MCF 10A (cell line): ENCODE measurements at regions of chr6 and their contacts with region 1.

Region 1: GRCh38 chr6:158704181-158704822 is 54.4 kb downstream of the SYTL3 start:
- DNase-seq: peak; percentile 65
- H3K4me3 Mint-ChIP-seq: peak overlapping the region; percentile 75
- H3K27ac Mint-ChIP-seq: peak overlapping the region; percentile 12
- H3K4me1 Mint-ChIP-seq: peaks cover 32% of the 10 kb centered on the region
- H3K27me3 Mint-ChIP-seq: no peaks in the 10 kb centered on the region
- CTCF ChIP-seq: peak; percentile 99

Region 2: GRCh38 chr6:158684745-158685324 is 19.5 kb before region 1 on chr6:
- CTCF ChIA-PET with region 1: no interaction called
- POLR2A ChIA-PET with region 1: no interaction called
- intact Hi-C with region 1: no loop called
- DNase-seq: no peak
- H3K4me3 Mint-ChIP-seq: no peak overlapping the region
- H3K27ac Mint-ChIP-seq: no peak overlapping the region
- H3K4me1 Mint-ChIP-seq: no peaks in the 10 kb centered on the region
- H3K27me3 Mint-ChIP-seq: no peaks in the 10 kb centered on the region
- CTCF ChIP-seq: no peak

Region 3: GRCh38 chr6:158737710-158738615 is 33.7 kb after region 1 on chr6:
- CTCF ChIA-PET with region 1: interaction called, 5 read pairs
- POLR2A ChIA-PET with region 1: interaction called, 21 read pairs
- intact Hi-C with region 1: no loop called
- DNase-seq: peak; percentile 86
- H3K4me3 Mint-ChIP-seq: no peak overlapping the region
- H3K27ac Mint-ChIP-seq: peak overlapping the region; percentile 1
- H3K4me1 Mint-ChIP-seq: peaks cover 22% of the 10 kb centered on the region
- H3K27me3 Mint-ChIP-seq: no peaks in the 10 kb centered on the region
- CTCF ChIP-seq: no peak

Region 4: GRCh38 chr6:158793432-158793831 is 89.1 kb after region 1 on chr6:
- CTCF ChIA-PET with region 1: interaction called, 8 read pairs
- POLR2A ChIA-PET with region 1: interaction called, 3 read pairs
- intact Hi-C with region 1: loop called (anchors 1 kb)
- DNase-seq: peak; percentile 71
- H3K4me3 Mint-ChIP-seq: no peak overlapping the region
- H3K27ac Mint-ChIP-seq: no peak overlapping the region
- H3K4me1 Mint-ChIP-seq: peaks cover 15% of the 10 kb centered on the region
- H3K27me3 Mint-ChIP-seq: no peaks in the 10 kb centered on the region
- CTCF ChIP-seq: peak; percentile 22

Region 5: GRCh38 chr6:158853072-158853871 is 149.0 kb after region 1 on chr6:
- CTCF ChIA-PET with region 1: no interaction called
- POLR2A ChIA-PET with region 1: interaction called, 9 read pairs
- intact Hi-C with region 1: loop called (anchors 1 kb)
- DNase-seq: peak; percentile 97
- H3K4me3 Mint-ChIP-seq: no peak overlapping the region
- H3K27ac Mint-ChIP-seq: no peak overlapping the region
- H3K4me1 Mint-ChIP-seq: peaks cover 15% of the 10 kb centered on the region
- H3K27me3 Mint-ChIP-seq: no peaks in the 10 kb centered on the region
- CTCF ChIP-seq: no peak

Region 6: GRCh38 chr6:158972241-158973233 is 268.2 kb after region 1 on chr6:
- CTCF ChIA-PET with region 1: interaction called, 87 read pairs
- POLR2A ChIA-PET with region 1: interaction called, 14 read pairs
- intact Hi-C with region 1: loop called (anchors 1 kb)
- DNase-seq: peak; percentile 63
- H3K4me3 Mint-ChIP-seq: no peak overlapping the region
- H3K27ac Mint-ChIP-seq: no peak overlapping the region
- H3K4me1 Mint-ChIP-seq: peaks cover 5% of the 10 kb centered on the region
- H3K27me3 Mint-ChIP-seq: no peaks in the 10 kb centered on the region
- CTCF ChIP-seq: peak; percentile 57

Region 7: DNA sequence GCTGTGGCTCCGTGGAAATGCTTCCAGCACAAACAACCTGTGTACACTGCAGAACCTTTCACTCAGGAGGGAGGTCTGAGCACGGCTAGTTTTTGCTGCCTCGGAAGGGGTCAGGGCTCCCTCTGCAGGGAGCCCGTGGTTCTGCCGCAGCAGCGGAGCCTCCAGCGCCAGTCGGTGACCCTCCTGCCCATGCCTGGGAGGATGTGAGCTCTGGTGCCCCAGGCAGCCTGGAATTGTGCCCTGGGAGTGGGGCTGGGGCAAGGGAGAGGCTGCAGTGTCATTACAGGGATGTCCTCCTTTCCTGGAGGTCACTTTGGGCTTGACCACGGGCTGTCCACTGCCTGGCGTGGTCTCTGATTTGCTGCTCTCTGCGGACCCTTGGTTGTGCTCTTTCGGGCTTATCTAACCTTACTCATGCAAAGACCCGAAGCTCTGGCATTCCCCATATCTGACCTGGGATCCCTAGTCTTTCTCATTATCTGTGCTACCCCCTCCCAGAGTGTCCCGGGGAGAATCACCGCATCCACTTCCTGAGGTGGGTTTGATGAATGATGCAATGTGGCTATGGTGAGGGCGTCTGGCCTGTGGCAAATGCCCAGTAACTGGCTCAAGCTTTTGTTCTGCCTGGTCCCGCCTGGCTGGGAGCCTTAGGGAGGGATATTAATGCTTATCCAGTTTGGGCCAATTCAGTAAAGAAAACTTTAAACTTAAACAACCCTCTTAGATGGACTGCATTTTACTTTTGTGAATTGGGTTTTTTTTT is 400.0 kb after region 1 on chr6:
- CTCF ChIA-PET with region 1: interaction called, 4 read pairs
- POLR2A ChIA-PET with region 1: no interaction called
- intact Hi-C with region 1: loop called (anchors 10 kb)
- DNase-seq: peak; percentile 61
- H3K4me3 Mint-ChIP-seq: no peak overlapping the region
- H3K27ac Mint-ChIP-seq: no peak overlapping the region
- H3K4me1 Mint-ChIP-seq: peaks cover 6% of the 10 kb centered on the region
- H3K27me3 Mint-ChIP-seq: peaks cover 16% of the 10 kb centered on the region
- CTCF ChIP-seq: peak; percentile 93